Head of caudate nucleus (tissue), 42 donors: ENCODE measurements at regions of chr16 and their contacts with region 1.

Region 1: GRCh38 chr16:2969545-2970521 is 685 bp downstream of the PAQR4 start:
- DNase-seq: peak; percentile 50 to 87 (median 77)

Region 2: GRCh38 chr16:2919511-2920255 is 50.1 kb before region 1 on chr16:
- intact Hi-C with region 1: loop called (anchors 5 kb)
- DNase-seq: peak in 37 of 42 donors; percentile 22 to 87 (median 65)